Cardiac septum (tissue), 1 donor: ENCODE measurements at regions of chr18 and their contacts with region 1.

Region 1: GRCh38 chr18:67104700-67105284 is 411.7 kb downstream of the DSEL start:
- DNase-seq: no peak

Region 2: DNA sequence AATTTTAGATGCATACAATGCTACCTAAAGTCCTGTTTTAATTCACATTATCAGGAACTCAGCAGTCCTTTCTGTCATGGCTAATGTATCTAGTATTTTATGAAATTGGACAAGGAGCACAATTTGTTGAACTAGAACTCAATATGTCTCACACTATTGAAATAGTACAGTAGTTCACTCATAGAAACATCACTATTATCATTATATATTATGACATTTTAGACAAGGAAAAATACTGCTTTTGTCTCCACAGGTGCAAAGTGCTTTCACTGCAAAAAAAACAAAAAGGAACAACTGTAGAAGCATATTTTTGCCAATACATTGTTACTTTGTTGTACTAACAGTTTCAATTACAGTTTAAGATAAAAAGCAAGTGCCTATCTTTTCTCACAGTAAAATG is 81.7 kb before region 1 on chr18:
- intact Hi-C with region 1: no loop called
- DNase-seq: no peak

Region 3: DNA sequence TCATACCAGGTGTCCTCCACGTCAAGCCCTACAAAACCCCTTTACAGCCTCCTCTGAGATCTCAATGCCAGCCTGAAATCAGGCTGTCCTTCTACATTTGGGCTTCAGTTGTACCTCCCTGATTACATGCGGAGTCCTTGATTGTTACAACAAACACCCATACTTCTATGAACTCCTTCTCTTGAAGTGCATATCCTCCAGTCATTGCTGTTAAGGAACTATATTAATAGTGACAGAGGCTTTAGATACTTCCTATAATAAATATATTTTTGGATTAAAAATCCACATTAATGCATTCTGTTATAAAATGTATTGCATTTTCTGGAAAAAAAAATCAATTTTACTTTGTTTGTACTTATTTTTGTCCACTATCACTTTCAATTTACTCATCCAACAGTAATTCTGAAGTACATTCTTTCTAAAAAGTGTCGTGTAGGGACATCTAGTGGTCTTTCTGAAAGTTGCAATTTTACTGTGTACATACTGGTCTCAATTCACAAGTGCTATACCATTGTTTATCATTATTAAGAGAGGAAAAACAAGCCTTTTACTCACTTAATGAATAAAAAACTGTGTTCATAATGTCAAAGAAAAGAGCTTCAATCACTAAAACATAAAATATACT is 95.3 kb after region 1 on chr18:
- intact Hi-C with region 1: loop called (anchors 2 kb)
- DNase-seq: no peak